HepG2 (cell line): ENCODE measurements at regions of chr5 and their contacts with region 1.

Region 1: DNA sequence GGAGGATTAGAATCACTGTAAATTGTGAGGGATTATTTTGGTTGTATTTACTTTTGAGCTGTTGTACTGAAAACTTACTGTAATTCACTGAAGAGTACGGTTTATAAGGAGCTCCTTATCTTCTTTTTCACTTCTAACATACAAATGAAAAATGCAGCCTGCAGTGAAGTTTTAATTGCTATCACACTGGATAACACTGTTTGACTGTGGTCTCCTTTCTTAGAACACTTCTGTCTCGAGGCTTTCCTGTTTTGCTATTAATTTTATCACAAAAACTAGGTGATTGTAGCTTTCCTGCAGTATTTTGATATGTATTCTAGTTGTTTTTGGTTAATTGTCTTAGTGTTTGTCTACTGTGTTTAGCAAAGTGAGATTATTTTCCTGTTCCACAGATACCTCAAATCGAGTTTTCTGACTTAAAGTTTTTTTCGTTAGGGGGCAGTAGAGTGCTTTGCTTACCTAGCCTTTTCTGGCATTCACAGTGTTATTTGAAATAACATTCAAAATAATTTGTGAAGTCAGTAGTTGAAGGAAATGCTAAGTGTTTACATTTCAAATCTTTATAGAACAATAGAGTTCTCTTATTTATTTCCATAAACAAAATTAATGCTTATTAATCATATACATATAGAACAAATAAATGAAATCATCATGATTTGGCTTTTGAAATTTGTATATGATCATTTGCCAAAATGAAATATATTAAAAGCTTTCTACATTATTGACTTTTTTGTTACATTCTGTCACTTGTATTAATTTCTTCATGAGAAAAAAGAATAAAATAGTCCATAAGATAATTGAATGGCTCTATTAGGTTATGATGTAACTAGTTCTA is 52.9 kb downstream of the COMMD10 start:
- DNase-seq: peak; percentile 46
- ATAC-seq: peak; percentile 56; the same call in 2 of the 3 replicates
- H3K4me3 ChIP-seq: no peak overlapping the region
- H3K27ac ChIP-seq: no peak overlapping the region
- H3K4me1 ChIP-seq: no peaks in the 10 kb centered on the region
- H3K27me3 ChIP-seq: no peaks in the 10 kb centered on the region
- CTCF ChIP-seq: peak; percentile 73
- EP300 ChIP-seq: no peak
- POLR2A ChIP-seq: no peak
- RAD21 ChIP-seq: 0 out of 2 replicates have a peak, but pooled peaks have one; percentile 51

Region 2: GRCh38 chr5:115758356-115758755 is 379.4 kb before region 1 on chr5:
- CTCF ChIA-PET with region 1: no interaction called
- POLR2A ChIA-PET with region 1: no interaction called
- in situ Hi-C with region 1: no loop called
- intact Hi-C with region 1: no loop called
- DNase-seq: no peak
- ATAC-seq: no peak
- H3K4me3 ChIP-seq: no peak overlapping the region
- H3K27ac ChIP-seq: no peak overlapping the region
- H3K4me1 ChIP-seq: no peaks in the 10 kb centered on the region
- H3K27me3 ChIP-seq: no peaks in the 10 kb centered on the region
- CTCF ChIP-seq: no peak
- EP300 ChIP-seq: no peak
- POLR2A ChIP-seq: no peak
- RAD21 ChIP-seq: no peak

Region 3: GRCh38 chr5:115930626-115931337 is 207.0 kb before region 1 on chr5:
- CTCF ChIA-PET with region 1: no interaction called
- POLR2A ChIA-PET with region 1: no interaction called
- in situ Hi-C with region 1: no loop called
- intact Hi-C with region 1: no loop called
- DNase-seq: no peak
- ATAC-seq: no peak
- H3K4me3 ChIP-seq: no peak overlapping the region
- H3K27ac ChIP-seq: no peak overlapping the region
- H3K4me1 ChIP-seq: no peaks in the 10 kb centered on the region
- H3K27me3 ChIP-seq: no peaks in the 10 kb centered on the region
- CTCF ChIP-seq: no peak
- EP300 ChIP-seq: no peak
- POLR2A ChIP-seq: no peak
- RAD21 ChIP-seq: no peak

Region 4: GRCh38 chr5:116068028-116068632 is 69.6 kb before region 1 on chr5:
- CTCF ChIA-PET with region 1: no interaction called
- POLR2A ChIA-PET with region 1: no interaction called
- in situ Hi-C with region 1: no loop called
- intact Hi-C with region 1: no loop called
- DNase-seq: peak; percentile 44
- ATAC-seq: peak; percentile 50; the same call in 1 of the 3 replicates
- H3K4me3 ChIP-seq: no peak overlapping the region
- H3K27ac ChIP-seq: no peak overlapping the region
- H3K4me1 ChIP-seq: no peaks in the 10 kb centered on the region
- H3K27me3 ChIP-seq: no peaks in the 10 kb centered on the region
- CTCF ChIP-seq: peak; percentile 59
- EP300 ChIP-seq: no peak
- POLR2A ChIP-seq: no peak
- RAD21 ChIP-seq: no peak

Region 5: DNA sequence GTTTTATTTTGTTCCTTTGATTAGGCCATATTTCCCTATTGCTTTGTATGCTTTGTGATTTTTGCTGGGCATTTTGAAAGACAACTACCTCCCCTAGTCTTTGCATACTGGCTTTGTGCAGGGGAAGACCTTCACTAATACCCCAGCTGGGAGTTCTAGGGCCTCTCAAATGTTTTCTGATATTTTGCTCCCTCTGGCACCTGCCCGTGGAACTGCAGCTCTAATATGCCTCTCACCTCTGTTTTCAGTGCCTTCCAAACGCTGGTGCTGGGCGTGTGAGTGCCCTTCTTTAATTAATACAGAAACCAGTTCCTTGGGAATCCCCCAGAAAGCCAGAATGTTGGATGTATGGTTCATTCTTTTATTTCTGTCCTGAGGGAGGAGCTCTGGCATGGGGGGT is 151.5 kb after region 1 on chr5:
- CTCF ChIA-PET with region 1: interaction called, 10 read pairs
- POLR2A ChIA-PET with region 1: no interaction called
- in situ Hi-C with region 1: no loop called
- intact Hi-C with region 1: loop called (anchors 1 kb)
- DNase-seq: peak; percentile 7
- ATAC-seq: peak; percentile 50; the same call in 2 of the 3 replicates
- H3K4me3 ChIP-seq: no peak overlapping the region
- H3K27ac ChIP-seq: no peak overlapping the region
- H3K4me1 ChIP-seq: no peaks in the 10 kb centered on the region
- H3K27me3 ChIP-seq: no peaks in the 10 kb centered on the region; a peak in 1 of 5 replicates
- CTCF ChIP-seq: 0 out of 2 replicates have a peak, but pooled peaks have one; percentile 6
- EP300 ChIP-seq: no peak
- POLR2A ChIP-seq: no peak
- RAD21 ChIP-seq: no peak

Region 6: GRCh38 chr5:116557669-116558271 is 420.0 kb after region 1 on chr5:
- CTCF ChIA-PET with region 1: no interaction called
- POLR2A ChIA-PET with region 1: no interaction called
- in situ Hi-C with region 1: no loop called
- intact Hi-C with region 1: loop called (anchors 5 kb)
- DNase-seq: peak; percentile 39
- ATAC-seq: peak; percentile 60; the same call in 2 of the 3 replicates
- H3K4me3 ChIP-seq: no peak overlapping the region
- H3K27ac ChIP-seq: no peak overlapping the region
- H3K4me1 ChIP-seq: peaks cover 22% of the 10 kb centered on the region
- H3K27me3 ChIP-seq: no peaks in the 10 kb centered on the region
- CTCF ChIP-seq: peak; percentile 67
- EP300 ChIP-seq: no peak
- POLR2A ChIP-seq: no peak
- RAD21 ChIP-seq: peak; percentile 67

Region 7: GRCh38 chr5:116766470-116766947 is 628.7 kb after region 1 on chr5:
- CTCF ChIA-PET with region 1: no interaction called
- POLR2A ChIA-PET with region 1: no interaction called
- in situ Hi-C with region 1: no loop called
- intact Hi-C with region 1: loop called (anchors 10 kb)
- DNase-seq: peak; percentile 86
- ATAC-seq: peak; percentile 67
- H3K4me3 ChIP-seq: peak overlapping the region in 1 of 3 experiments; percentile 23; a peak in 1 of 6 replicates
- H3K27ac ChIP-seq: no peak overlapping the region
- H3K4me1 ChIP-seq: peaks cover 81% of the 10 kb centered on the region
- H3K27me3 ChIP-seq: no peaks in the 10 kb centered on the region
- CTCF ChIP-seq: no peak
- EP300 ChIP-seq: peak in 1 of 2 experiments; percentile 56; a peak in 1 of 4 replicates
- POLR2A ChIP-seq: no peak
- RAD21 ChIP-seq: no peak